Naive thymus-derived CD4-positive, alpha-beta T cell (primary cell): ENCODE measurements at regions of chr15 and their contacts with region 1.

Region 1: GRCh38 chr15:89129123-89129815 is 41.0 kb downstream of the ABHD2 start:
- DNase-seq: peak; percentile 23 to 54 (median 45)
- ATAC-seq: peak; percentile 39
- H3K4me3 ChIP-seq: no peak overlapping the region
- H3K4me3 Mint-ChIP-seq: no peak overlapping the region
- H3K27ac ChIP-seq: no peak overlapping the region
- H3K27ac Mint-ChIP-seq: no peak overlapping the region
- H3K4me1 ChIP-seq: peaks cover 10 to 17% of the 10 kb centered on the region in 2 donors
- H3K4me1 Mint-ChIP-seq: peaks cover 10 to 33% (median 17%) of the 10 kb centered on the region in 7 donors
- H3K27me3 ChIP-seq: no peaks in the 10 kb centered on the region
- H3K27me3 Mint-ChIP-seq: no peaks in the 10 kb centered on the region

Region 2: GRCh38 chr15:88904624-88905327 is 224.5 kb before region 1 on chr15:
- CTCF ChIA-PET with region 1: interaction called, 35 read pairs
- POLR2A ChIA-PET with region 1: no interaction called
- intact Hi-C with region 1: loop called in 1 of 2 experiments (anchors 1 kb)
- DNase-seq: peak; percentile 79 to 99 (median 98)
- ATAC-seq: peak; percentile 99
- H3K4me3 ChIP-seq: no peak overlapping the region
- H3K4me3 Mint-ChIP-seq: peak overlapping the region; percentile 16 to 78 (median 54)
- H3K27ac ChIP-seq: peak overlapping the region; percentile 70
- H3K27ac Mint-ChIP-seq: peak overlapping the region; percentile 76 to 98 (median 94)
- H3K4me1 ChIP-seq: peaks cover 19 to 37% of the 10 kb centered on the region in 2 donors
- H3K4me1 Mint-ChIP-seq: peaks cover 23 to 65% (median 52%) of the 10 kb centered on the region in 7 donors
- H3K27me3 ChIP-seq: no peaks in the 10 kb centered on the region
- H3K27me3 Mint-ChIP-seq: no peaks in the 10 kb centered on the region

Region 3: DNA sequence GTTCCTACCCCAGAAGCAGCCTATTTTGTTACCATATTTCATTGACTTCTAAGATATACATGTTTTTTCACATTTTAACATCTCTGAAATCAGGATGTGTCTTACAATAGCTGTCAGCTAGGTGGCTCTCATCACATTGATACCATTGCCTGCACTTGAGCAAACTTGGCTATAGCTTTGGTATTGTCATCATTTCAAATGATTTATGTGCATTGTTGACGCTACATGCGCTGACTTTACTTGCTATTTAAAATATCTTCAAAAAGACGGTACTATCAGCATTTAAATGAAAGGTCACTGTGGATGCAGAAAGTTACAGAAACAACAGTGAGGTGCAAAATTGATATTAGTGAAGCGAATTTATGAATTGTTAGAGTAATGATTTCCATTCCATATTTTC is 95.0 kb before region 1 on chr15:
- CTCF ChIA-PET with region 1: interaction called, 11 read pairs
- POLR2A ChIA-PET with region 1: no interaction called
- intact Hi-C with region 1: loop called in 1 of 2 experiments (anchors 1 kb)
- DNase-seq: peak in 1 of 9 donors; percentile 17
- ATAC-seq: no peak
- H3K4me3 ChIP-seq: no peak overlapping the region
- H3K4me3 Mint-ChIP-seq: no peak overlapping the region
- H3K27ac ChIP-seq: no peak overlapping the region
- H3K27ac Mint-ChIP-seq: peak overlapping the region in 1 of 9 donors; percentile 25
- H3K4me1 ChIP-seq: no peaks in the 10 kb centered on the region
- H3K4me1 Mint-ChIP-seq: peaks cover 0 to 4% (median 0%) of the 10 kb centered on the region in 7 donors
- H3K27me3 ChIP-seq: no peaks in the 10 kb centered on the region
- H3K27me3 Mint-ChIP-seq: peaks cover 0 to 33% (median 8%) of the 10 kb centered on the region in 5 donors

Region 4: DNA sequence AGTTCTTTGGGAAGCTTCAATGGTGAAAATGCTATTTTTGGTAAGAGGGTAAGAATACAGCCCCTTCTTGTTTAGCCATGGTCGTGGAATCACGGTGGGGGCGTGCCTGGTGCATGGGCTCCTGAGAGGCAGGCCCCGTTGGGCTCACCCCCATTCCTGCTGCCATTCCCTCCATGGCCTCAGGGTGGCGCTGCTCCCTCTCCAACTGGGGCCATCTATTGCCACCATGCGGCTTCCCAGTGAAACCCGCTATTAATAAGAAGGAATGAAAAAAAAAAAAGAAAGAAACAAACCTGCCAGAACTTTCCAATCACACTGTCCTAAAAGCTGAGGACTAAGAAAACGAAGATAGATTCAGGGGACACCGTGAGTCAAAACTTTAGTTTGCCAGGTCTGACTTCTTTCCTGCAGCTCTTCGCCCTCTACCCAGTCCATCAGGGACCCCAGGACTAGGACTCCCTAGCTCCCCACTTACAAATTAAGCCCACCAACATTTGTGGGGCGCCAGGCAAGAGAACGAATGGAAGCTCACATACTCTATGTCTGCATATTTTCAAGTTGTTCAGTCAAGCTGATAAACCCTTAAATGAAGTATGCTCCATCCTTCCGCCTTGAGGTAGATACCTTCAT is 71.7 kb before region 1 on chr15:
- CTCF ChIA-PET with region 1: interaction called, 99 read pairs
- POLR2A ChIA-PET with region 1: no interaction called
- intact Hi-C with region 1: loop called (anchors 1 kb)
- DNase-seq: peak; percentile 66 to 87 (median 78)
- ATAC-seq: peak; percentile 99
- H3K4me3 ChIP-seq: no peak overlapping the region
- H3K4me3 Mint-ChIP-seq: no peak overlapping the region
- H3K27ac ChIP-seq: no peak overlapping the region
- H3K27ac Mint-ChIP-seq: peak overlapping the region in 3 of 9 donors; percentile 25 to 62 (median 26)
- H3K4me1 ChIP-seq: no peaks in the 10 kb centered on the region
- H3K4me1 Mint-ChIP-seq: peaks cover 0 to 11% (median 5%) of the 10 kb centered on the region in 7 donors
- H3K27me3 ChIP-seq: no peaks in the 10 kb centered on the region
- H3K27me3 Mint-ChIP-seq: peaks cover 0 to 3% (median 0%) of the 10 kb centered on the region in 5 donors

Region 5: GRCh38 chr15:89101302-89102191 is 27.7 kb before region 1 on chr15:
- CTCF ChIA-PET with region 1: interaction called, 10 read pairs
- POLR2A ChIA-PET with region 1: no interaction called
- intact Hi-C with region 1: no loop called
- DNase-seq: no peak
- ATAC-seq: no peak
- H3K4me3 ChIP-seq: no peak overlapping the region
- H3K4me3 Mint-ChIP-seq: no peak overlapping the region
- H3K27ac ChIP-seq: no peak overlapping the region
- H3K27ac Mint-ChIP-seq: peak overlapping the region in 2 of 9 donors; percentile 14 to 72
- H3K4me1 ChIP-seq: no peaks in the 10 kb centered on the region
- H3K4me1 Mint-ChIP-seq: peaks cover 18 to 50% (median 40%) of the 10 kb centered on the region in 7 donors
- H3K27me3 ChIP-seq: no peaks in the 10 kb centered on the region
- H3K27me3 Mint-ChIP-seq: no peaks in the 10 kb centered on the region

Region 6: GRCh38 chr15:89143503-89144162 is 14.4 kb after region 1 on chr15:
- CTCF ChIA-PET with region 1: interaction called, 3 read pairs
- POLR2A ChIA-PET with region 1: no interaction called
- intact Hi-C with region 1: loop called in 1 of 2 experiments (anchors 1 kb)
- DNase-seq: no peak
- ATAC-seq: peak; percentile 86
- H3K4me3 ChIP-seq: no peak overlapping the region
- H3K4me3 Mint-ChIP-seq: no peak overlapping the region
- H3K27ac ChIP-seq: no peak overlapping the region
- H3K27ac Mint-ChIP-seq: no peak overlapping the region
- H3K4me1 ChIP-seq: peaks cover 0 to 9% of the 10 kb centered on the region in 2 donors
- H3K4me1 Mint-ChIP-seq: peaks cover 0 to 21% (median 7%) of the 10 kb centered on the region in 7 donors
- H3K27me3 ChIP-seq: no peaks in the 10 kb centered on the region
- H3K27me3 Mint-ChIP-seq: no peaks in the 10 kb centered on the region

Region 7: DNA sequence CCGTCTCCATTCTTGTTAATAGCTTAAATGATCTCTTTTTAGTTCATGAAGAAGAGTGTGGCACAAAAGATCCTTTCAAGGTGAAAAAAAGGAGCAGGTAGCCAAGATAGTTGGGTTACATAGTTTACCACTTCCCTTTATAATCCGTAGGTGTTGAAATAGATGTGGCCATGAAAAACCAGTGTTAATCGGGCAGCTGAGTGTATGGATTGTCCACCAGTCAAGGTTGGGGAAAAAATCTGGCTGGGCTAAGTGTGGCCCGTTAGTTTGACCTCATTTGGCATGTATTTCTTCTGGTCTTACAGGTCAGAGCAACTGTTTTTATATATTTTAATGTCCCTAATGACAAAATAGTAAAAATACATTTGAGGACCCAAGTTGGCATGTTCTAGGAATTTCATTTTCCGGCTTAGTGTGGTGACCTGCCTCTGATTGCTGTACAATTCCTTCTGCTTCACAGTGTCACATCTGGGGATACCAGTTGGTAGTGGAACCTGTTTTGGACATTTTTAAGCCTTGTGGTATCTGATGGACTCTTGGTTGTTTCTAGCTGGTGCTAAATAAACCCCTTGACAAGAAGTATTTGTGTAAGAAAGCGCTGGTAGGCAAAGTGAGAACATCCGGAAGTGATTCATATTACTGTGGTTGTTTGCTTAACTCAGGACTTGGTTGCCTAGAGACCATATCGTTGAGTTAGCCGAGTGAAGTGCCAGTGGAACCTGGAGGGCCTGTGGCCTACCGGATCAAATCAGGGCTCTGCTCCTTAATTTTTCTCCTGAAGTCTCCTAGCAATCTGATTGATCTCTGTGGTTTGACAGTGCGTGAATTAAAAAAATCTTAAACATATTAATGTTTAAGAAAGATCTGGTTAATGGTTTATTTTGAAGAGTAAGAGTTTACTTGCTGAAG is 1271.4 kb after region 1 on chr15:
- CTCF ChIA-PET with region 1: no interaction called
- POLR2A ChIA-PET with region 1: no interaction called
- intact Hi-C with region 1: no loop called
- DNase-seq: peak in 8 of 9 donors; percentile 49 to 89 (median 82)
- ATAC-seq: peak; percentile 98
- H3K4me3 ChIP-seq: peak overlapping the region; percentile 37
- H3K4me3 Mint-ChIP-seq: peak overlapping the region; percentile 61 to 86 (median 80)
- H3K27ac ChIP-seq: peak overlapping the region; percentile 83
- H3K27ac Mint-ChIP-seq: peak overlapping the region; percentile 94 to 99 (median 99)
- H3K4me1 ChIP-seq: peaks cover 30 to 36% of the 10 kb centered on the region in 2 donors
- H3K4me1 Mint-ChIP-seq: peaks cover 38 to 71% (median 64%) of the 10 kb centered on the region in 7 donors
- H3K27me3 ChIP-seq: no peaks in the 10 kb centered on the region
- H3K27me3 Mint-ChIP-seq: no peaks in the 10 kb centered on the region